ENCODE measurements at regions of chr6 and their contacts with region 1.

Region 1: DNA sequence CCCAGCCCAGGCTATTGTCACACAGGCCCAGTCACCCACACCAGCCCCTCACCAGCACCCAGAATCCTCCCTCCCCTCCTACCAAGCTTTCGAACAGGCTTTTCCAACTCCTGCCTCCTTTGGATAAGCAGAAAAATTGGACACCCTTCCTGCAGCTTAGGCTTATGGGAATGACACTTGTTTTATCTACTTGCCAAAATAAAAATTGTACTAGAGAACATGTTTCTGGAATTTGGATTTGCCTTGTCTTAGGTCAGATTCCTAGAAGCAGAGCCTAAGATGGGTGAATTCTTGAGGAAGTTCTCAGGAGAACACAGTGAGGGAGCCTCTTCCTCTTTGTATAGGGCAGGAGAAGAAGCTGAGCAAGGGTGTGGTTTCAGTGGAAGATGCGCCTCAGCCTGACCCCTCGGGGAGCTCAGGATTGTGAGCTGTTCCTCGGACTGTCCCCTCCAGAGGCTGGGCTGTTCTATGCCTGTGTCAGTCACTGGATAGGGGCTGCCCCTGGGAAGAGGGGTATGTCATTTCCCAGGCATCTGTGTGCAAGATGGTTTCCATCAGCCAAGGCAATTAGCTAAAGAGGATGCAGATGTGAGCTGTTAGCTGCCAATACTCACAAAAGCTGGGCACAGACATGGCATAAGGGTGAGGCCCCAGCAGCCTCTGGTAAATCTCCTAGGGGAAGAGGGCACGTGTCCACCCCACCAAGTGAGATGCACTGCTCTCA is 33.9 kb downstream of the ITPR3 start:
- DNase-seq: no peak
- H3K4me3 ChIP-seq: no peak overlapping the region
- H3K27ac ChIP-seq: no peak overlapping the region
- H3K4me1 ChIP-seq: no peaks in the 10 kb centered on the region
- H3K27me3 ChIP-seq: no peaks in the 10 kb centered on the region
- CTCF ChIP-seq: no peak

Region 2: GRCh38 chr6:33317669-33318425 is 337.1 kb before region 1 on chr6 and contains the start of gene ZBTB22:
- CTCF ChIA-PET with region 1: no interaction called
- dilution Hi-C with region 1: no loop called
- in situ Hi-C with region 1: no loop called
- intact Hi-C with region 1: no loop called
- DNase-seq: peak; percentile 98
- H3K4me3 ChIP-seq: peak within 1 kb of the TSS; percentile 45 to 57 (median 51)
- H3K27ac ChIP-seq: peak within 1 kb of the TSS; percentile 65
- H3K4me1 ChIP-seq: peaks cover 51% of the 10 kb centered on the region
- H3K27me3 ChIP-seq: no peaks in the 10 kb centered on the region
- CTCF ChIP-seq: no peak
- total RNA-seq, gene ZBTB22: 11.5 to 16.3 TPM

Region 3: GRCh38 chr6:33717934-33718455 is 63.0 kb after region 1 on chr6:
- CTCF ChIA-PET with region 1: no interaction called
- dilution Hi-C with region 1: loop called (anchors 5 kb)
- in situ Hi-C with region 1: no loop called
- intact Hi-C with region 1: no loop called
- DNase-seq: no peak
- H3K4me3 ChIP-seq: no peak overlapping the region
- H3K27ac ChIP-seq: no peak overlapping the region
- H3K4me1 ChIP-seq: peaks cover 24% of the 10 kb centered on the region
- H3K27me3 ChIP-seq: no peaks in the 10 kb centered on the region
- CTCF ChIP-seq: no peak

Region 4: DNA sequence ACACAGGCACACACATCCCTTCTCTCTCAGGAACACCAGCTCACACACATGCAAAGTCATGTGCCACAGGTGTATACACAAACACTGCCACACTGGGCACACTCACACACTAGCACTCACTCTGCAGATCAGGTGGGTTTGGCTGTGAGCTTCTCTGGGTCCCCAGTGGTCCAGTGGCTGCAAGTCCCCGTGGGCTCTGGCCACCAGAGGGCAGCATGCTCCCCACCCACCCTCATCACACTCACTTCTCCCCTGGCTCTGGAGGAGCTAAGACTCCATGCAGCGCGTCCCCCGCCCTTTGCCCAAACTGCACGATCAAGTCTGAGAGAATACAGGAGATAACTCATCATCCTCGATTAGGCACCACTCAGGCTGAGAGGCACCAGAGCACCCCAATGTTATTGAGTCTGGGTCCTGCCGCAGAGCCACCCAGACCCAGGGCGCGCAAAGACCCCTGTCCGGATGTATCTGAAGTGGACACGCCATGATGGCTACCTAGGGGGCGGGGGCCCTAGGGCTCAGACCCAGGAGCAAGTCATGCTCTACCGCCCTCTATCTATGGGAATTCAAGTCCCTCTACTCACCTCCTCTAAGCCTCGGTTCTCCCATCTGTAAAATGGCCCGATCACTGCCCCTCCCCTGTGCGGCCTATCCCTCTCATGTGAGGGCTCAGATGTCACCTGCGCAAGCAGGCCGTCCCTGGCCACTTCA is 400.4 kb after region 1 on chr6:
- CTCF ChIA-PET with region 1: no interaction called
- dilution Hi-C with region 1: no loop called
- in situ Hi-C with region 1: no loop called
- intact Hi-C with region 1: no loop called
- DNase-seq: peak; percentile 25
- H3K4me3 ChIP-seq: no peak overlapping the region
- H3K27ac ChIP-seq: no peak overlapping the region
- H3K4me1 ChIP-seq: no peaks in the 10 kb centered on the region
- H3K27me3 ChIP-seq: no peaks in the 10 kb centered on the region
- CTCF ChIP-seq: peak; percentile 77 to 83

Region 5: GRCh38 chr6:34248727-34249551 is 593.9 kb after region 1 on chr6 and contains the start of gene SMIM29:
- CTCF ChIA-PET with region 1: no interaction called
- dilution Hi-C with region 1: no loop called
- in situ Hi-C with region 1: no loop called
- intact Hi-C with region 1: no loop called
- DNase-seq: peak; percentile 94
- H3K4me3 ChIP-seq: peak within 1 kb of the TSS; percentile 83 to 95 (median 84)
- H3K27ac ChIP-seq: peak within 1 kb of the TSS; percentile 48
- H3K4me1 ChIP-seq: peaks cover 47% of the 10 kb centered on the region
- H3K27me3 ChIP-seq: no peaks in the 10 kb centered on the region
- CTCF ChIP-seq: peak; percentile 38 to 87
- total RNA-seq, gene SMIM29: 20.3 to 40.6 TPM